Uterus (tissue), 4 donors: ENCODE measurements at regions of chr1 and their contacts with region 1.

Region 1: DNA sequence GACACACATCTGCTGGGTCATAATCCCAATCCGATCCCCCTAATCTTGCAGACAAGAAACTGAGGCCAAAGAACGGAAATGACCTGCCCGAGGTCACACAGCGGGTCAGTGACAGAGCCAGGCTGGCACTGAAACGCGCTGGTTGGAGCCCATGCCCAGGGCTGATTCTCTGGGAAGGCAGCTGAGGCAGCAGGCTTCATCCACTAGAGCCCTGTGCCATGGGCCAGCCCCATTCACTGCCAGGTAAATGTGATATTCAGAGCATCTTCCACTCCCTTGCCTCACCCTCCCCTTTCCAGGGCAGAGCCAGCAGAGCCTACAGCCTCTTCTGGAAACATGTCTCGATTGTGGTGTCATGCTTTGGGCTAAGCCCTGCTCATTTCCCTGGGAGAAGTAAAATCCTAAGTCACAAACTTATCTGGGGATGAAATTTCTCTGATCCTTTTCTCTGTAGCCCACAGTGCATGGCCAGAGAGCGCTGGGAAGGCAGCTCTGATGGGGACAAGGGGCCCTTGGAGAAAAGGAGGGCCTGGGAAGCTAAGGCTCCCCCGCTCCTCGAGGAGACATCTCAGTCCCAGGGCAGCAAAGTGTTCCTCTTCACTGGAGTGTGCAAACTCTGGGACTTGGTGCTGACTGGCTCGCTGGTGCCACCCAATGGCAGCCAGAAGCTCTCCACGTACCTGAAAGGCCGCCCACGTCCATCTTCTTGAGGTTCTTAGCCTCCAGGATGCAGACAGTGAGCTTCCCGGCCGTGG is 110.4 kb downstream of the SYT2 start:
- DNase-seq: peak; percentile 71 to 73
- H3K4me3 ChIP-seq: no peak overlapping the region
- H3K27ac ChIP-seq: peak overlapping the region; percentile 74 to 78
- H3K4me1 ChIP-seq: no peaks in the 10 kb centered on the region
- H3K27me3 ChIP-seq: no peaks in the 10 kb centered on the region
- CTCF ChIP-seq: peak; percentile 73 to 90 (median 80)
- POLR2A ChIP-seq: no peak

Region 2: DNA sequence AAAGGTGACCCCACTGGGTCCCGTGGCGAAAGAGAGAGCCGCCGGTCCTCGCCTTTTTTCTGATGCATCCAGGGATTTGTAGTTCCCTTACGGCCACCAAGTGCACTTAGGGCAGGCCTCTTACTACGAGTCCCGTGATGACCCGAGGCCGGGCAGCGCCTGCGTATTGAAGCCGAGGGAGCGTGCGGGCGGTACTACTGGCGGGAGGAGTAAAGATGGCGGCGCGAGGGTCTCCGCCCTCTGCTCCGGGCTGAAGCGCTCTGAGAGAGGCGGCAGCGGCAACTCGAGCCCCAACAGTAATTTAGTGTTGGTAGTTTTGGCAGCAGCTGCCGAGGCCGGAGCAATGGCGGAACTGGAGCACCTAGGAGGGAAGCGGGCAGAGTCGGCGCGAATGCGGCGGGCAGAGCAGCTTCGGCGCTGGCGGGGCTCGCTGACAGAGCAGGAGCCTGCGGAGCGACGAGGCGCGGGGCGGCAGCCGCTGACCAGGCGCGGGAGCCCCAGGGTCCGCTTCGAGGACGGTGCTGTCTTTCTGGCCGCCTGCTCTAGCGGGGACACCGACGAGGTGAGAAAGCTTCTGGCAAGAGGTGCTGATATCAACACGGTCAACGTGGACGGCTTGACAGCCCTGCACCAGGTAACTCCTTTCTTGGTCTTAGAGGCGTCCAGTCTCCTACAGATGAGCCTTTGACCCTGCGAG is 251.2 kb before region 1 on chr1 and contains the start of gene PPP1R12B:
- intact Hi-C with region 1: loop called (anchors 10 kb)
- DNase-seq: peak; percentile 96 to 98
- H3K4me3 ChIP-seq: peak within 1 kb of the TSS; percentile 63 to 98
- H3K27ac ChIP-seq: peak within 1 kb of the TSS; percentile 77 to 87
- H3K4me1 ChIP-seq: no peaks in the 10 kb centered on the region
- H3K27me3 ChIP-seq: no peaks in the 10 kb centered on the region
- CTCF ChIP-seq: no peak
- POLR2A ChIP-seq: peak; percentile 45 to 53
- total RNA-seq, gene PPP1R12B: 197 to 386 (median 303) TPM

Region 3: DNA sequence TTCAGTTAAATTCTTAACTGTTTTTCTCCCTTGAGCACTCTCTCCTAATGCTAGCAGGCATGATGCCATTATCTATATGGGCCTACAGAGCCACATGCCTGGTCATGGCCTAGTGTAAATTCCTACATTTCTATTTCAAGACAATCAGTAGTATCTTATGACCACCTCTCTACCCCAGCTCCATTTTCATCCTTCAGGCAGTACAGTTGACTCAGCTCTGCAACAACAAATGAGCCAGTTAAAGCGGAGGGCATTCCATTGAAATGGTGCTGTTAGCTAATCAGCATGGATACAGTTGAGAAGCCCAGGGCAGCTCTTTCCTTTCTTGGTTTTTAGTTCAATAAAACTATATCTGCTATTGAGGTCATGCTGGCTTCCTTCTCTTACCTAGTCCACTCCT is 101.3 kb before region 1 on chr1:
- intact Hi-C with region 1: loop called (anchors 10 kb)
- DNase-seq: no peak
- H3K4me3 ChIP-seq: no peak overlapping the region
- H3K27ac ChIP-seq: no peak overlapping the region
- H3K4me1 ChIP-seq: no peaks in the 10 kb centered on the region
- H3K27me3 ChIP-seq: no peaks in the 10 kb centered on the region
- CTCF ChIP-seq: no peak
- POLR2A ChIP-seq: no peak

Region 4: GRCh38 chr1:202710070-202711045 is 110.5 kb after region 1 on chr1 and contains the start of gene SYT2:
- intact Hi-C with region 1: no loop called
- DNase-seq: peak in 1 of 2 donors; percentile 23
- H3K4me3 ChIP-seq: peak within 1 kb of the TSS in 1 of 2 donors; percentile 32
- H3K27ac ChIP-seq: no peak within 1 kb of the TSS
- H3K4me1 ChIP-seq: peaks cover 4 to 12% of the 10 kb centered on the region in 2 donors
- H3K27me3 ChIP-seq: peaks cover 7 to 9% of the 10 kb centered on the region in 2 donors
- CTCF ChIP-seq: no peak
- POLR2A ChIP-seq: no peak
- total RNA-seq, gene SYT2: 1.1 TPM in 1 of 4 donors, not detected in the others